ENCODE measurements at regions of chr2 and their contacts with region 1.

Region 1: DNA sequence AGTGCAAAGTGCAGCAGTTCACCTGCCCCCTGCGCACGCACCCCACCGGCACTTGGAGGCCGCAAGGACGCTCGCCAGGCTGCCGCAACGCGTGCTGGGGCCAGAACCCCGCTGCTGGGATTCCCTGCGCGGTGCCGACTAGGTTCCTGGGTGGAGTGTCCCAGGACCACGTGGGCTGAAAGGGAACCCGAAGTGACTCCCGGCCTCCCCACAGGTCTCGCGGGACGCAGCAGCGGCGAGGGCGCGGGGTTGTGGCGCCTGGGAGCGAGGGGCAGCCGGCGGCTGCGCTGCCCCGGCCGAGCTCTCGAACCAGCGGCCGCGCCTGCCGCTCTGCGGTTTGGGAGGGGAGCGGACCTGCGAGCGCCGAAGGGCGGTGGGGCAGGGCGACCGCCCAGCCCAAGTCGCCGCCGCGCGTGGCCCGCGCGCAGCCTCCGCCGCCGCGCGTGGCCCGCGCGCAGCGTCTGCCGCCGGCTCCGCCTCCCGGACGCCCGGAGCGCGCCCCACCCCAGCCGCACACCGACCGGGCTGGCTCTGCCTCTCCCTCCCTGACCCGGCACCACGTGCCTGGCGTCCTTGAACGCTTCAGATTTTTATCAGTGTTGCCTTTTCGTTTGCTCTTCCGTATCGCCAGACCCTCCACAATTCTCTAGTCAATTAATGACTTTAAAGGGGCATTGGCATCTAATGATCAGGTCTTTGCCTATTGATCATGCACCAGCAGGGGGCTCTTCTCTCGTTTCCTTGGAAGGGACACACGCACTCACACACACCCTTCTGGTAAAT is at the start of gene FTCDNL1:
- DNase-seq: peak; percentile 16
- ATAC-seq: peak; percentile 96
- H3K4me3 ChIP-seq: peak within 1 kb of the TSS; percentile 75
- H3K27ac ChIP-seq: peak within 1 kb of the TSS; percentile 29; the same call in 1 of the 2 replicates
- H3K4me1 ChIP-seq: no peaks in the 10 kb centered on the region
- H3K27me3 ChIP-seq: no peaks in the 10 kb centered on the region
- CTCF ChIP-seq: peak; percentile 44 to 68 (median 63)
- EP300 ChIP-seq: no peak
- POLR2A ChIP-seq: peak; percentile 68
- RAD21 ChIP-seq: peak; percentile 15; the same call in 1 of the 2 replicates
- polyA plus RNA-seq, gene FTCDNL1: 1.9 to 2.0 TPM

Region 2: GRCh38 chr2:199861132-199861774 is 10.3 kb after region 1 on chr2:
- CTCF ChIA-PET with region 1: interaction called, 11 read pairs
- POLR2A ChIA-PET with region 1: no interaction called
- RAD21 ChIA-PET with region 1: no interaction called
- SMC1A ChIA-PET with region 1: no interaction called
- in situ Hi-C with region 1: no loop called
- intact Hi-C with region 1: no loop called
- DNase-seq: no peak
- ATAC-seq: no peak
- H3K4me3 ChIP-seq: no peak overlapping the region
- H3K27ac ChIP-seq: no peak overlapping the region
- H3K4me1 ChIP-seq: no peaks in the 10 kb centered on the region
- H3K27me3 ChIP-seq: no peaks in the 10 kb centered on the region
- CTCF ChIP-seq: peak; percentile 38 to 49 (median 47); a peak in 5 of 6 replicates
- EP300 ChIP-seq: no peak
- POLR2A ChIP-seq: no peak
- RAD21 ChIP-seq: peak; percentile 63

Region 3: GRCh38 chr2:199911052-199911876 is 60.4 kb after region 1 on chr2 and contains the start of gene C2orf69:
- CTCF ChIA-PET with region 1: no interaction called
- POLR2A ChIA-PET with region 1: no interaction called
- RAD21 ChIA-PET with region 1: no interaction called
- SMC1A ChIA-PET with region 1: no interaction called
- in situ Hi-C with region 1: no loop called
- intact Hi-C with region 1: loop called (anchors 2 kb)
- DNase-seq: peak; percentile 93
- ATAC-seq: peak; percentile 91
- H3K4me3 ChIP-seq: peak within 1 kb of the TSS; percentile 95
- H3K27ac ChIP-seq: peak within 1 kb of the TSS; percentile 88
- H3K4me1 ChIP-seq: no peaks in the 10 kb centered on the region
- H3K27me3 ChIP-seq: no peaks in the 10 kb centered on the region
- CTCF ChIP-seq: no peak
- EP300 ChIP-seq: no peak
- POLR2A ChIP-seq: peak; percentile 90
- RAD21 ChIP-seq: no peak
- polyA plus RNA-seq, gene C2orf69: 6.3 to 7.9 TPM

Region 4: DNA sequence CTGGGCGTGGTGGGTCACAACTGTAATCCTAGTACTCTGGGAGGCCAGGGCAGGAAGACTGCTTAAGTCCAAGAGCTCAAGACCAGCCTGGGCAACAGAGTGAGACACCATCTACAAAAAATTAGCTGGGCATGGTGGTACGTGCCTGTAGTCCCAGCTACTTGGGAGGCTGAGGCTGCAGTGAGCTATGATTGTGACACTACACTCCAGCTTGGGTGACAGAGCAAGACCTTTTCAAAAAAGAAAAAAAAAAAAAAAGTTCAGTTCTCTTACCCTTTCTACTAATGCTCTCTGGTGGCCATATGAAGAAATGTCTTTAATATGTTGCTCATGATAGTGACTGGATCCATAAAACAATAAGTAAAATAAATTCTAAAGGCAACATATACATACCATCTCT is 89.5 kb after region 1 on chr2:
- CTCF ChIA-PET with region 1: interaction called, 3 read pairs
- POLR2A ChIA-PET with region 1: no interaction called
- RAD21 ChIA-PET with region 1: no interaction called
- SMC1A ChIA-PET with region 1: no interaction called
- in situ Hi-C with region 1: no loop called
- intact Hi-C with region 1: loop called (anchors 1 kb)
- DNase-seq: no peak
- ATAC-seq: peak; percentile 83
- H3K4me3 ChIP-seq: no peak overlapping the region
- H3K27ac ChIP-seq: no peak overlapping the region
- H3K4me1 ChIP-seq: no peaks in the 10 kb centered on the region
- H3K27me3 ChIP-seq: no peaks in the 10 kb centered on the region
- CTCF ChIP-seq: peak; percentile 4 to 41 (median 24); a peak in 1 of 6 replicates
- EP300 ChIP-seq: no peak
- POLR2A ChIP-seq: no peak
- RAD21 ChIP-seq: peak; percentile 56